K562 (cell line): ENCODE measurements at regions of chr16 and their contacts with region 1.

Region 1: GRCh38 chr16:10964039-10964890 is 19.9 kb downstream of the CLEC16A start:
- DNase-seq: peak; percentile 78 to 88 (median 78)
- ATAC-seq: peak; percentile 96
- H3K4me3 ChIP-seq: no peak overlapping the region
- H3K27ac ChIP-seq: no peak overlapping the region
- H3K4me1 ChIP-seq: peaks cover 16 to 18% of the 10 kb centered on the region in 2 experiments; a peak in 4 of 5 replicates
- H3K27me3 ChIP-seq: no peaks in the 10 kb centered on the region
- CTCF ChIP-seq: peak; percentile 91 to 97 (median 96)
- EP300 ChIP-seq: no peak
- POLR2A ChIP-seq: no peak
- RAD21 ChIP-seq: peak; percentile 87 to 92

Region 2: DNA sequence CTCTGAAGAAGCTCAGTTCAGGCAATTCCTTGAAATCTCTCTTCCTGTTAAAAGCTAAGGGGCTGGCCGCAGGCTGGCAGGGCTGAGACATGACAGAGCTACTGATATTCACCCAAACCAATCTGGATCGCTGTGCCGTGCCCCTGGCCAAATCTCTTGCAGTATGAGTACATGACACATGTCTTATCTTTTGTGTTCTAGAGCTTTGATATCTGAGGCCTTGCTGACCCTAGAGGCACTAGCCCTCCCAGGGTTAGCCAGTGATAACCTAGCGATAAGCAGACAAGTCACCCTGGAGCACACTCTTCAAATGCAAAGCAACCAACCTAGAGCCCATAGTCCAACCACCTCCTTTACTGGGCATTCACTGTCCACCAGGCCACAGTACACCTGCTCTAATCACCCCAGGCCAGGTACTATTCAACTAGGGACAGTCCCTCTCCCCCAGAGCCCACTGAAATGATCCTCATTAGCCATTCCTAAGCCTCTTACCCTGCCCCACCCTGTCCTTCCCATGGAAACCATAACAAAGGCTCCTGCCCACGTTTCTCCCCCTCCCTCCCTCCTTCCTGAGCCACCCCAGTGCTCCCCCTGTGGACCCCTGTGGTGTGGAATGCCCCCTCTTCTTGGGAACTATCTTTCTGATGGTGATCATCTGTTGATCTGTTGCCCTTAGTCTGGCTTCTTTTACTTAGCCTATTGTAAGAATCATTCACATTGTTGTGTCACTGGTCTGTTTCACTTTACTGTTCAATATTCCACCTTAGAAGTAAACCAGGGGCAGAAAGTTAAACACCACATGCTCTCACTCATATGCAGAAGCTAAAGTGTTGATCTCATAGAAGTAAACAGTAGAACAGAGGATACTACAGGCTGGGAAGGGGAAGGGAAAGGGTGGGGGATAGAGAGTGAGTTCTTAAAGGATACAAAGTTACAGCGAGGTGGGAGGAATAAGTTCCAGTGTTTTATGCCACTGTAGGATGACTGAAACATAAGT is 322.0 kb before region 1 on chr16:
- CTCF ChIA-PET with region 1: no interaction called
- POLR2A ChIA-PET with region 1: no interaction called
- in situ Hi-C with region 1: no loop called
- intact Hi-C with region 1: no loop called
- DNase-seq: no peak
- ATAC-seq: no peak
- H3K4me3 ChIP-seq: no peak overlapping the region
- H3K27ac ChIP-seq: no peak overlapping the region
- H3K4me1 ChIP-seq: no peaks in the 10 kb centered on the region; a peak in 1 of 5 replicates
- H3K27me3 ChIP-seq: peaks cover 0 to 15% of the 10 kb centered on the region in 2 experiments; a peak in 3 of 5 replicates
- CTCF ChIP-seq: no peak
- EP300 ChIP-seq: no peak
- POLR2A ChIP-seq: no peak
- RAD21 ChIP-seq: no peak

Region 3: GRCh38 chr16:10918294-10919002 is 45.8 kb before region 1 on chr16:
- CTCF ChIA-PET with region 1: no interaction called
- POLR2A ChIA-PET with region 1: no interaction called
- in situ Hi-C with region 1: no loop called
- intact Hi-C with region 1: no loop called
- DNase-seq: peak; percentile 80 to 93 (median 82)
- ATAC-seq: peak; percentile 97
- H3K4me3 ChIP-seq: no peak overlapping the region
- H3K27ac ChIP-seq: no peak overlapping the region
- H3K4me1 ChIP-seq: peaks cover 3 to 10% of the 10 kb centered on the region in 2 experiments; a peak in 2 of 5 replicates
- H3K27me3 ChIP-seq: peaks cover 6 to 17% of the 10 kb centered on the region in 2 experiments; a peak in 4 of 5 replicates
- CTCF ChIP-seq: peak; percentile 89 to 98 (median 95)
- EP300 ChIP-seq: no peak
- POLR2A ChIP-seq: no peak
- RAD21 ChIP-seq: peak; percentile 75 to 92

Region 4: DNA sequence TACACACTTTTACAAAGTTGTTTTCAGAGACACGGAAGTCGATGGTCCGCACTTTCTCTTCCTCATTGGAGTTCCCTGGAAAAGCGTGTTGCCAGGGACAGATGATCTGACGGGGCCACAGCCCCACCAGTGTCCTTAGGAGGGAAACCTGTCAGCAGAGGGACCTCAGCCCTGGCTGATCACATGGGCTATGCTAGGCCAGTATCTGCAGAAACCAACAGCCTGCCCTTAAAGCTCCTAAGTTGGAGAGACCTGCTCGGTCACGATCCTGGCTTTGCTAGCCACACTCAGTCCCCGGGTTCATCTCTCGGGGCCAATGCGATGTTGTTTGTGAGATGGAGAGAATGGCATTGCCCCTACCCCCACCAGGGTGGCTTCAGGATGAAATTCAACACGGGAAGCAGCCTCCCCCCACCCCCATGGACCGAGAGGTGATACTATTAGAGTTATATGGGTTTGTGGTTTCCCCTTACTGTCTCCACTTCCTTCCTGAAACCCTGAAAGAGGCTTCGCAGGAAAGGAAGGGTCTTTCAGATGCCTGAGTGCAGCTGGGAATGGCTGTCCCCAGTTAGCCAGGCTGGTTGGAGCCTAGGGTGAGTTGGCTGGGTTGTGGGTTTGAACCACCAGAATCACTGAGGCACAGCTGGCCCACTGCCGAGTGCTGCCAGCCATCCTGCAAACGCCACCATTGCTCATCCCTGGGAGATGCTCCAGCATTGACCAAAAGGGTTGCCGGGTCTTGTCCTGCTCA is 397.6 kb after region 1 on chr16:
- CTCF ChIA-PET with region 1: interaction called, 6 read pairs
- POLR2A ChIA-PET with region 1: interaction called, 3 read pairs
- in situ Hi-C with region 1: loop called (anchors 5 kb)
- intact Hi-C with region 1: no loop called
- DNase-seq: no peak
- ATAC-seq: peak; percentile 43
- H3K4me3 ChIP-seq: no peak overlapping the region
- H3K27ac ChIP-seq: no peak overlapping the region
- H3K4me1 ChIP-seq: peaks cover 7 to 31% of the 10 kb centered on the region in 2 experiments; a peak in 4 of 5 replicates
- H3K27me3 ChIP-seq: no peaks in the 10 kb centered on the region
- CTCF ChIP-seq: no peak
- EP300 ChIP-seq: no peak
- POLR2A ChIP-seq: no peak
- RAD21 ChIP-seq: no peak

Region 5: GRCh38 chr16:11546608-11547061 is 582.4 kb after region 1 on chr16:
- CTCF ChIA-PET with region 1: no interaction called
- POLR2A ChIA-PET with region 1: no interaction called
- in situ Hi-C with region 1: loop called (anchors 25 kb)
- intact Hi-C with region 1: no loop called
- DNase-seq: no peak
- ATAC-seq: no peak
- H3K4me3 ChIP-seq: no peak overlapping the region
- H3K27ac ChIP-seq: no peak overlapping the region
- H3K4me1 ChIP-seq: no peaks in the 10 kb centered on the region
- H3K27me3 ChIP-seq: peaks cover 31 to 53% of the 10 kb centered on the region in 2 experiments
- CTCF ChIP-seq: no peak
- EP300 ChIP-seq: no peak
- POLR2A ChIP-seq: no peak
- RAD21 ChIP-seq: no peak

Region 6: GRCh38 chr16:11667824-11668622 is 703.8 kb after region 1 on chr16 and contains the start of gene SNN:
- CTCF ChIA-PET with region 1: no interaction called
- POLR2A ChIA-PET with region 1: no interaction called
- in situ Hi-C with region 1: loop called (anchors 25 kb)
- intact Hi-C with region 1: no loop called
- DNase-seq: peak; percentile 92 to 99 (median 98)
- ATAC-seq: peak; percentile 99
- H3K4me3 ChIP-seq: peak within 1 kb of the TSS; percentile 41
- H3K27ac ChIP-seq: no peak within 1 kb of the TSS
- H3K4me1 ChIP-seq: peaks cover 4 to 51% of the 10 kb centered on the region in 2 experiments; a peak in 4 of 5 replicates
- H3K27me3 ChIP-seq: peaks cover 2 to 31% of the 10 kb centered on the region in 2 experiments; a peak in 3 of 5 replicates
- CTCF ChIP-seq: no peak
- EP300 ChIP-seq: no peak
- POLR2A ChIP-seq: no peak
- RAD21 ChIP-seq: no peak
- polyA plus RNA-seq, gene SNN: 0.07 to 0.22 TPM